ENCODE measurements at regions of chr15 and their contacts with region 1.

Region 1: GRCh38 chr15:101723874-101724674 is at the start of gene TARS3:
- DNase-seq: peak; percentile 98
- ATAC-seq: peak; percentile 93
- H3K4me3 Mint-ChIP-seq: peak within 1 kb of the TSS; percentile 78
- H3K27ac Mint-ChIP-seq: peak within 1 kb of the TSS; percentile 86
- H3K4me1 Mint-ChIP-seq: peaks cover 17% of the 10 kb centered on the region
- H3K27me3 Mint-ChIP-seq: no peaks in the 10 kb centered on the region
- total RNA-seq, gene TARS3: 9.3 to 10.3 TPM

Region 2: GRCh38 chr15:101277038-101277882 is 446.8 kb before region 1 on chr15 and contains the start of gene SELENOS:
- CTCF ChIA-PET with region 1: no interaction called
- POLR2A ChIA-PET with region 1: no interaction called
- intact Hi-C with region 1: loop called in 1 of 2 experiments (anchors 1 kb)
- DNase-seq: peak; percentile 93
- ATAC-seq: peak; percentile 92
- H3K4me3 Mint-ChIP-seq: peak within 1 kb of the TSS; percentile 89
- H3K27ac Mint-ChIP-seq: peak within 1 kb of the TSS; percentile 79
- H3K4me1 Mint-ChIP-seq: peaks cover 24% of the 10 kb centered on the region
- H3K27me3 Mint-ChIP-seq: no peaks in the 10 kb centered on the region
- total RNA-seq, gene SELENOS: 14.5 to 20.8 TPM

Region 3: GRCh38 chr15:101652098-101652782 is 71.8 kb before region 1 on chr15 and contains the start of gene TM2D3:
- CTCF ChIA-PET with region 1: no interaction called
- POLR2A ChIA-PET with region 1: interaction called, 8 read pairs
- intact Hi-C with region 1: loop called (anchors 1 to 2 kb)
- DNase-seq: peak; percentile 96
- ATAC-seq: peak; percentile 96
- H3K4me3 Mint-ChIP-seq: peak within 1 kb of the TSS; percentile 91
- H3K27ac Mint-ChIP-seq: peak within 1 kb of the TSS; percentile 97
- H3K4me1 Mint-ChIP-seq: peaks cover 43% of the 10 kb centered on the region
- H3K27me3 Mint-ChIP-seq: no peaks in the 10 kb centered on the region
- total RNA-seq, gene TM2D3: 34.3 to 35.9 TPM

Region 4: DNA sequence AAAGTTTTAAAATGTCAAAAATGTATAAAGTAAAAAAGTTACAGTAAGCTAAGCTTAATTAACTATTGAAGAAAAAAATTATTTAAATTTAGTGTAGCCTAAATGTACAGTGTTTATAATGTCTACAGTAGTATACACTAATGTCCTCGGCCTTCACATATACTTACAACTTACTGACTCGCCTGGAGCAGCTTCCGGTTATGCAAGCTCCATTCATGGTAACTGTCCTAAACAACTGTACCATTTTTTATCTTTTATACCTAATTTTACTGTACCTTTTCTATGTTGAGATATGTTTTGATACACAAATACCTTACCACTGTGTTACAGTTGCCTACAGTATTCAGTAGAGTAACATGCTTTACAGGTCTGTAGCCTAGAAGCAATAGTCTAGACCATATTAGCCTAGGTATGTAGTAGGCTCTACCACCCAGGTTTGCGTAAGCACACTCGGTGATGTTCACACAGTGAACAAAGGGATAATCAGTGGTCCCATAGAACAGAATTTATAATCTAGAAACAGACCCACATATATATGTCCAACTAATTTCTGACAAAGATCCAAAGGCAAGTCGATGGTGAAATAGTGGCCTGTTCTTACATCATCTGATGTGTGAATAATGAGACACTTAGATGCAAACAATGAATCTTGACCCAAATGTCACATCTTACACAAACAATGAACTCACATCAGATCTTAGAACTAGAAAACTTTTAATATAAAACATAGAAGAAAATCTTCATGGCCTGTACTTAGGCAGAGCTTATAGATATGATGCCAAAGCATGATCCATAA is 54.5 kb before region 1 on chr15:
- CTCF ChIA-PET with region 1: no interaction called
- POLR2A ChIA-PET with region 1: no interaction called
- intact Hi-C with region 1: no loop called
- DNase-seq: no peak
- ATAC-seq: no peak
- H3K4me3 Mint-ChIP-seq: no peak overlapping the region
- H3K27ac Mint-ChIP-seq: peak overlapping the region; percentile 35
- H3K4me1 Mint-ChIP-seq: no peaks in the 10 kb centered on the region
- H3K27me3 Mint-ChIP-seq: no peaks in the 10 kb centered on the region

Region 5: GRCh38 chr15:101684384-101684783 is 39.7 kb before region 1 on chr15:
- CTCF ChIA-PET with region 1: no interaction called
- POLR2A ChIA-PET with region 1: no interaction called
- intact Hi-C with region 1: no loop called
- DNase-seq: no peak
- ATAC-seq: peak; percentile 47
- H3K4me3 Mint-ChIP-seq: no peak overlapping the region
- H3K27ac Mint-ChIP-seq: no peak overlapping the region
- H3K4me1 Mint-ChIP-seq: peaks cover 10% of the 10 kb centered on the region
- H3K27me3 Mint-ChIP-seq: no peaks in the 10 kb centered on the region

Region 6: DNA sequence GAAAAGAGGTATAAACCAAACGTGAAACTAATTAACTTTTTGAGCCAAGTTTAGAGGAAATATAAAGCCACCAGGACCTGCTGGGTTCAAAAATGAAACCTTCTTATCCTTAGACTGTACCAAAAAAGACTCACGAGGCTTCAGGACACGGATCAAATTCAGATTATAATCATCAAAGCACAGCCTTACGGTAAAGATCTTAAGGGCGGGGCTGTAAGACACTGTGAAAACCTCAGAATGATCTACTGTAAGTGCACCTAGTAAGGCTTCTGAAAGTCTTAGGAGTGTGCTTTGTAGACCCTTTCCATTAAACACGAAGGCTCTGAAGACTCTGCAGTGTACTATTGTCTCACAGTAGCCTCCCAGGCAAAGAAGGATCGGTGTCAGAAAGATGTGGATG is 26.6 kb before region 1 on chr15:
- CTCF ChIA-PET with region 1: no interaction called
- POLR2A ChIA-PET with region 1: no interaction called
- intact Hi-C with region 1: loop called in 1 of 2 experiments (anchors 2 kb)
- DNase-seq: no peak
- ATAC-seq: peak; percentile 77
- H3K4me3 Mint-ChIP-seq: peak overlapping the region; percentile 3
- H3K27ac Mint-ChIP-seq: peak overlapping the region; percentile 83
- H3K4me1 Mint-ChIP-seq: peaks cover 49% of the 10 kb centered on the region
- H3K27me3 Mint-ChIP-seq: no peaks in the 10 kb centered on the region

Measured in activated CD4-positive, alpha-beta T cell treated with anti-CD3 and anti-CD28 coated beads for 36 hours (primary cell).